A673 (cell line): ENCODE measurements at regions of chr14 and their contacts with region 1.

Region 1: GRCh38 chr14:94439453-94440057 is 13.0 kb downstream of the SERPINA11 start:
- DNase-seq: no peak
- H3K4me3 ChIP-seq: no peak overlapping the region
- H3K27ac ChIP-seq: no peak overlapping the region
- H3K4me1 ChIP-seq: no peaks in the 10 kb centered on the region
- H3K27me3 ChIP-seq: peaks cover 21% of the 10 kb centered on the region
- CTCF ChIP-seq: no peak

Region 2: GRCh38 chr14:94485944-94486841 is 46.6 kb after region 1 on chr14:
- CTCF ChIA-PET with region 1: interaction called, 44 read pairs
- POLR2A ChIA-PET with region 1: no interaction called
- intact Hi-C with region 1: loop called (anchors 1 kb)
- DNase-seq: peak; percentile 61
- H3K4me3 ChIP-seq: no peak overlapping the region
- H3K27ac ChIP-seq: no peak overlapping the region
- H3K4me1 ChIP-seq: peaks cover 6% of the 10 kb centered on the region
- H3K27me3 ChIP-seq: peaks cover 4% of the 10 kb centered on the region
- CTCF ChIP-seq: peak; percentile 99

Region 3: DNA sequence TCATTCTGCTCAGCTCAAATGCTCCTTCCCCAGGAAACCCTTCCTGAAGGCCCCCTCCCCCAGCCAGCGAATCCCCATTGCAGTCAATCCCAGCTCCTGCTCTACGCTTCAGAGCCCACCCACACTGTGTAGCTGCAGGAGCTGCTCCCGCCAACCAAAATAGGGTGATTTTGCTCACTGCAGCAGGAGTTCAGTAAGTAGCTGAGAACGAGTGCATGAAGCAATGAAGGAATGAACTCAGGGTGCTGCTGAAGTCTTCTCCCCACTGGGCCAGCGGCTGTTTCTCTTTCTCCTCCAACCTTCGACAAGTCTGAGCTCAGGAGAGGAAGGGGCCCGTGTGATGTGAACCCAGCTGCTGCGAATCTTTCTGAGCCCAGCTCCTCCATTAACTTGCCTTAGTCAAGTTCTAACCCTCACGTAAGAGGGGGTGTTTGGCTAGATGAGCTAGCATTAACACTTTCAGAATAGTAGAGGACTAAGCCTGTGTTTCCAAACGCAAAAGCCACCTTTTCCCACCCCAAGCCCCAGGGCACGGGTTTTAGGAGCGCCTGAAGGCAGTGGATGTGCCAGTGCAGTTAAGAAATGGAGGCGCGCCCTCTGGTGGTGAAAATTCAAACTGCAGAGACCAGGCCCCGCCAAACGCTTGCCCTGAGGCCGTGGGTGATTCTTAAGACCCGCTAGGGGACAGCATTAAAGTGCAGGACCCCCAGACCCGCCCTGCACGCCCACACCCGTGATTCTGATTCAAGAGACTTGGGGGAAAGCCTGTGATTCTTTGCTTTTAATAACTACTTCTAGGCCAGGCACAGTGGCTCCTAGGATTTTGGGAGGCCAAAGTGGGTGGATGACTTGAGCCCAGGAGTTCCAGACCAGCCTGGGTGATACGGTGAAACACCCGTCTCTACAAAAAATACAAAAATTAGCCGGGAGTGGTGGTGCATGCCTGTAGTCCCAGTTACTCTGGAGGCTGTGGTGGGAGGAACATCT is 109.7 kb after region 1 on chr14:
- CTCF ChIA-PET with region 1: no interaction called
- POLR2A ChIA-PET with region 1: no interaction called
- intact Hi-C with region 1: loop called (anchors 2 kb)
- DNase-seq: peak; percentile 72
- H3K4me3 ChIP-seq: no peak overlapping the region
- H3K27ac ChIP-seq: no peak overlapping the region
- H3K4me1 ChIP-seq: no peaks in the 10 kb centered on the region
- H3K27me3 ChIP-seq: peaks cover 5% of the 10 kb centered on the region
- CTCF ChIP-seq: peak; percentile 92